Dorsolateral prefrontal cortex (tissue), 120 donors: ENCODE measurements at regions of chr9 and their contacts with region 1.

Region 1: GRCh38 chr9:114285166-114285867 is 37.6 kb upstream of the ORM1 start:
- DNase-seq: peak in 6 of 10 donors; percentile 8 to 35 (median 30)
- H3K4me3 ChIP-seq: no peak overlapping the region
- H3K27ac ChIP-seq: no peak overlapping the region
- H3K27me3 ChIP-seq: no peaks in the 10 kb centered on the region
- CTCF ChIP-seq: no peak

Region 2: GRCh38 chr9:114250235-114250568 is 35.1 kb before region 1 on chr9:
- intact Hi-C with region 1: loop called in 1 of 2 experiments (anchors 5 kb)
- DNase-seq: peak; percentile 69 to 98 (median 88)
- H3K4me3 ChIP-seq: peak overlapping the region in 37 of 59 donors; percentile 1 to 53 (median 28)
- H3K27ac ChIP-seq: peak overlapping the region in 24 of 59 donors; percentile 2 to 72 (median 40)
- H3K27me3 ChIP-seq: no peaks in the 10 kb centered on the region
- CTCF ChIP-seq: peak in 8 of 56 donors; percentile 5 to 23 (median 18)